AG04450 (cell line): ENCODE measurements at regions of chr3 and their contacts with region 1.

Region 1: GRCh38 chr3:36957862-36958686 is 13.2 kb upstream of the TRANK1 start:
- DNase-seq: peak; percentile 58
- H3K4me3 ChIP-seq: peak overlapping the region; percentile 22; the same call in 1 of the 2 replicates
- H3K27ac ChIP-seq: peak overlapping the region; percentile 78
- H3K27me3 ChIP-seq: peaks cover 2% of the 10 kb centered on the region
- CTCF ChIP-seq: no peak

Region 2: GRCh38 chr3:36734742-36735141 is 223.3 kb before region 1 on chr3:
- CTCF ChIA-PET with region 1: interaction called, 31 read pairs
- POLR2A ChIA-PET with region 1: no interaction called
- DNase-seq: no peak
- H3K4me3 ChIP-seq: no peak overlapping the region
- H3K27ac ChIP-seq: no peak overlapping the region
- H3K27me3 ChIP-seq: no peaks in the 10 kb centered on the region
- CTCF ChIP-seq: no peak

Region 3: GRCh38 chr3:36792342-36792741 is 165.7 kb before region 1 on chr3:
- CTCF ChIA-PET with region 1: interaction called, 38 read pairs
- POLR2A ChIA-PET with region 1: no interaction called
- DNase-seq: peak; percentile 3
- H3K4me3 ChIP-seq: no peak overlapping the region
- H3K27ac ChIP-seq: no peak overlapping the region
- H3K27me3 ChIP-seq: peaks cover 16% of the 10 kb centered on the region
- CTCF ChIP-seq: peak; percentile 65

Region 4: DNA sequence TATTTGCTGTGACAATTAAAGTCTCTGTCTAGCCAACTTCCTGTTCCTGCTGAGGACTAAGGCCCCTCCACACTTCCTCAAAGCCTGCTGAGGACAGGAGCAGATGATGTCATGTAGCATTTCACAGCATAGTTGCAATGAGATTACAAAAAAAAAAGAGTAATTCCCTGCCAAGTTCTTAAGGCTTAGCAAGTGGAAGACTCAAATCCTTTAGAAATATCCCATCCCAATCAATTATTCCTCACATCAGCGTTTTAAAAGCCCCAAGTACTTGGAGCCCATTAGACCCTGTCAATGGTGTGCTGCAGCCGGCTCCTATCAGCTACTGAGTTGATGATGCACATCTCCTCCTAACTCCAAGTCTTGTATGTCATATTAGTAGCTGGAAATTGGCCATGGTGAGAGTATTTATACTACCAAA is 64.9 kb before region 1 on chr3:
- CTCF ChIA-PET with region 1: interaction called, 23 read pairs
- POLR2A ChIA-PET with region 1: no interaction called
- DNase-seq: no peak
- H3K4me3 ChIP-seq: no peak overlapping the region
- H3K27ac ChIP-seq: no peak overlapping the region
- H3K27me3 ChIP-seq: no peaks in the 10 kb centered on the region
- CTCF ChIP-seq: no peak

Region 5: DNA sequence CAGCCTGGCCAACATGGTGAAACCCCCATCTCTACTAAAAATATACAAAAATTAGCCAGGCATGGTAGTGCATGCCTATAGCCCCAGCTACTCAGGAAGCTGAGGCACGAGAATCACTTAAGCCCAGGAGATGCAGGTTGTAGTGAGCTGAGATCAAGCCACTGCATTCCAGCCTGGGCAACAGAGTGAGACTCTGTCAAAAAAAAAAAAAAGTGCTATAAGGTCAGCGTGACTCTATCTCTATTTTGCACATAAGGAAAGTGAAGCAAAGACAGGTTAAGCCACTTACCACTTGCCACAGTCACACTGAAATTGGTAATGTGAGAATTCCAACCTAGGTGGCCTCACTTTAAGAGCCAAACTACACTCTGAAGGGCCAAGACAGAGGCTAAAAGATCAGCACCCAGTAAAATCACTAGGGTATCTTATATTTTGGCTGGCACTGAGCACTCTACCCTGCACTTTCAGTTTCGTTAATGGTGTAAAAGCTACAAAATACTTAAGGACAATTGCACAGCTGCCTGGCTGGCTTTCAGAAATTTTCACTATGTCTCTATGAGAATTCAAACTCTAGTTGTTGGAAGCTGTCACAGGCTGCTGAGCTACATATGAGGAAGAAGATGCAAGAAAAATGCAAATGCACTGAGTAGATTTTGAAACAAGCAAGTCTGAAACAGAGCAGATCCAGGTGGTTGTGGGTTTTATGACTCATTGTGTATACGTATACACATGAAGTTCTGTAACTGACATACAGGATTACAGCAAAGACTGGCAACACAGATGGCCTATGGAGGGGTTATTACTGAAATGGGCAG is 45.9 kb before region 1 on chr3:
- CTCF ChIA-PET with region 1: interaction called, 15 read pairs
- POLR2A ChIA-PET with region 1: no interaction called
- DNase-seq: peak; percentile 81
- H3K4me3 ChIP-seq: peak overlapping the region; percentile 41
- H3K27ac ChIP-seq: peak overlapping the region; percentile 82
- H3K27me3 ChIP-seq: no peaks in the 10 kb centered on the region
- CTCF ChIP-seq: no peak

Region 6: GRCh38 chr3:36944012-36944640 is 13.9 kb before region 1 on chr3:
- CTCF ChIA-PET with region 1: interaction called, 30 read pairs
- POLR2A ChIA-PET with region 1: interaction called, 3 read pairs
- DNase-seq: no peak
- H3K4me3 ChIP-seq: peak overlapping the region; percentile 69
- H3K27ac ChIP-seq: peak overlapping the region; percentile 47
- H3K27me3 ChIP-seq: no peaks in the 10 kb centered on the region
- CTCF ChIP-seq: peak; percentile 16; the same call in 1 of the 2 replicates

Region 7: GRCh38 chr3:36993326-36994283 is 35.5 kb after region 1 on chr3 and contains the start of gene MLH1:
- CTCF ChIA-PET with region 1: interaction called, 22 read pairs
- POLR2A ChIA-PET with region 1: no interaction called
- DNase-seq: peak; percentile 100
- H3K4me3 ChIP-seq: peak within 1 kb of the TSS; percentile 91
- H3K27ac ChIP-seq: peak within 1 kb of the TSS; percentile 99
- H3K27me3 ChIP-seq: no peaks in the 10 kb centered on the region
- CTCF ChIP-seq: no peak
- polyA plus RNA-seq, gene MLH1: 30.9 and 38.2 TPM in 2 replicates

Region 8: DNA sequence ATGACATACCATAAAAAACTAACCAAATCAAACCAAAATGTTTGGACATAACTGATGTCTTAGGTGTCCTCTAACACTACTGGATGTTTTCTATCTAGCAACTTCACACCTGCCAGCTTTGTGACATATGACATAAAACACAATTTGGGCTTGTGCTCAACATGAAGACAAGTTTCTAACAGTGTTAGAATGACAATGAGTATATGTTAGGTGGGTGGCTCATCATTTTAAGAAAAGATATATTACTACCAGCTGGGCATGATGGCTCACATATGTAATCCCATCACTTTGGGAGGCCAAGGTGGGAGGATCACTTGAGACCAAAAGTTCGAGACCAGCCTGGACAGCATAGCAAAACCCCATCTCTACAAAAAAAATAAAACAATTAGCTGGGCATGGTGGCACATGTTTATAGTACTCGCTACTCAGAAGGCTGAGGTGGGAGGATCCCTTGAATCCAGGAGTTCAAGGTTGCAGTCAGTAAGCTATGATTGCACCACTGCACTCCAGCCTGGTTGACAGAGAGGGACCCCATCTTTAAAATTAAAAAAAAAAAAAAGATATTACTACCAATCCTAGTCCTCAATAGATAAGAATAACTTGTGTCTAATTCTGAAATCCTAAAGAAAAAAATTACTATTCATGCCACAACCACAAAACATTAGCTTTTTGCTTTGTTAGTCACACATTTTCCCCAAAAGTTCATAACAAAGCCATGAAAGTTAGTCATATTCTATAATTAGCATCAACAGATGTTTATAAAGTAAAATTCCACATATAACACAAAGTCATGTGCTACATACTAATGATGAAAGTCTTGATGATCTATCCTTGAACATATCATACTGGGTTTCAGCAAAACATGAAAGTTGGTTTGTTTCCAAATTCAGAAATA is 156.4 kb after region 1 on chr3:
- CTCF ChIA-PET with region 1: no interaction called
- POLR2A ChIA-PET with region 1: no interaction called
- DNase-seq: peak; percentile 77
- H3K4me3 ChIP-seq: no peak overlapping the region
- H3K27ac ChIP-seq: peak overlapping the region; percentile 89
- H3K27me3 ChIP-seq: no peaks in the 10 kb centered on the region
- CTCF ChIP-seq: no peak

Region 9: GRCh38 chr3:37125195-37126073 is 167.4 kb after region 1 on chr3:
- CTCF ChIA-PET with region 1: no interaction called
- POLR2A ChIA-PET with region 1: no interaction called
- DNase-seq: no peak
- H3K4me3 ChIP-seq: no peak overlapping the region
- H3K27ac ChIP-seq: no peak overlapping the region
- H3K27me3 ChIP-seq: no peaks in the 10 kb centered on the region
- CTCF ChIP-seq: no peak